ENCODE measurements at regions of chr16 and their contacts with region 1.

Region 1: DNA sequence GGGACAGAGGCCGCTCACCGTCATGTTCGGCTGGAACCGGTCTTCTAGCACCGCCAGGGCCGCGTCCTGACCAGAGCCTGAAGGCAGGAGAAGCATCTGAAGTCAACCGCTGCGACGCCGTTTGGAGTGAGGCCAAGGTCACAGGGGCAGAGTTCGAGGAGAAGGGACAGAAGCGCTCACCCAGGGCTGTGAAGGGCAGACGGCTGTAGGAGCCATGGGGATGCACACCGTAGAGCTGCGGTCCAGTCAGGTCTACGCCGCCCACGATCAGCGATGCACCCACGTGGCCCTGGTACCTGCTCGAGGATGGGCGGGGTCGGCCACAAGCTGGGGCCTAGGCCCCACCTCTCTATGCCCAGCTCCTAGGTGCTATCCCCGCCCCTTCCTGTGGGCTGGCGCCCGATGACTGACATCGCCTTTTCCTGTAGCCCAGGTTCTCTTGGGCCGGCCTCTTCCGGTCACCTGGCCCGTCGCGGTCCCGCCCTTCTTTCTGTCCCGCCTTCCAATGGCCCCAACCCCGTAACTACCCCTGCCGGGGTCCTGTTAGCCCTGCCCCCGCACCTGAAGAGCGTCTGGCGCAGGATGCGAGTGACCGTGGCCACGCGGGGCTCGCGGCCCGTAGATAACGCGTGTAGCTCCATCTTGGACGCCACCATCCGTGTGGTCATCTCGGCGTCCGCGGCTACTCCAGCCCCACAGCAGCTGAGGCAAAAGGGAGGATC is 1.1 kb downstream of the PSMB10 start:
- DNase-seq: peak; percentile 98
- ATAC-seq: peak; percentile 91
- H3K4me3 Mint-ChIP-seq: peak overlapping the region; percentile 100
- H3K27ac Mint-ChIP-seq: peak overlapping the region; percentile 100
- H3K4me1 Mint-ChIP-seq: peaks cover 37% of the 10 kb centered on the region
- H3K27me3 Mint-ChIP-seq: no peaks in the 10 kb centered on the region

Region 2: DNA sequence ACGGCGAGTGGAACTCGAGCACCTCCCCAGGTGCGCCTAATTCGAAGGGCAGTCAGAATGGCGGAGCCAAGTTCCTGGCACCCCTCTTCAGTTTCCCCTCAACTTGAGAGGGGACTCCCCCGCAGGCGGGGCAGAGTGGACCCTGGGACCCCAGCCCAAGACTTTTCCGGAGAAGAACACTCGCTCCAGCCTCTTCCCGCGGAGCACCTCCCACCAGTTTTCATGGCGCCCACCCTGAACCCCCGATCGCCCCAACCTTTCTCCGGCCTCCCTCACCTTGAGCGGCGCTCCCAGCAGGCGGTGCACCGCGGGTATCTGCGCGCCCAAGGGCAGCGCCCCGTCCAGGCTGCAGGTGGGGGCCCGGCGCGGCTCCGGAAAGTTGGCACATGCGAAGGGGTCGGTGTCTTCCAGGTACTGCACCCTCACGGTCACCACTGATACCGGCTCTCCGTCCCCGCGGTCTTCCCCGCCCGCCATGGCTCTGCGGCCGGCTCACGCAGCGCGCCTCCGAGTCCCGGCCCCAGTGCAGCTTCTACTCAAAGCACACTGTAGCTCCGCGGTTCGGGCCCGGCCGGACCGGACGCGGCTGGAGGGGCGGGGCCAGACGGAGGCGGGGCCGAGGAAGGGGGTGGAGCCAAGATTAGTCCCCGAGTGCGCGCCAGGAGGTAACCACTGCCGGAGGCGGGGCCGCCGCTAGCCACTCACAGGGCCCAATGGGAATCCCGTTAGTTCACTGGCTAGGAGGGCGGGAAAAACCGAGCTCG is 688.4 kb before region 1 on chr16 and contains the start of gene FHOD1:
- CTCF ChIA-PET with region 1: no interaction called
- POLR2A ChIA-PET with region 1: no interaction called
- intact Hi-C with region 1: loop called in 1 of 2 experiments (anchors 5 kb)
- DNase-seq: peak; percentile 99
- ATAC-seq: peak; percentile 74
- H3K4me3 Mint-ChIP-seq: peak within 1 kb of the TSS; percentile 87
- H3K27ac Mint-ChIP-seq: peak within 1 kb of the TSS; percentile 85
- H3K4me1 Mint-ChIP-seq: peaks cover 52% of the 10 kb centered on the region
- H3K27me3 Mint-ChIP-seq: peaks cover 11% of the 10 kb centered on the region
- total RNA-seq, gene FHOD1: 75.5 to 77.2 TPM

Region 3: DNA sequence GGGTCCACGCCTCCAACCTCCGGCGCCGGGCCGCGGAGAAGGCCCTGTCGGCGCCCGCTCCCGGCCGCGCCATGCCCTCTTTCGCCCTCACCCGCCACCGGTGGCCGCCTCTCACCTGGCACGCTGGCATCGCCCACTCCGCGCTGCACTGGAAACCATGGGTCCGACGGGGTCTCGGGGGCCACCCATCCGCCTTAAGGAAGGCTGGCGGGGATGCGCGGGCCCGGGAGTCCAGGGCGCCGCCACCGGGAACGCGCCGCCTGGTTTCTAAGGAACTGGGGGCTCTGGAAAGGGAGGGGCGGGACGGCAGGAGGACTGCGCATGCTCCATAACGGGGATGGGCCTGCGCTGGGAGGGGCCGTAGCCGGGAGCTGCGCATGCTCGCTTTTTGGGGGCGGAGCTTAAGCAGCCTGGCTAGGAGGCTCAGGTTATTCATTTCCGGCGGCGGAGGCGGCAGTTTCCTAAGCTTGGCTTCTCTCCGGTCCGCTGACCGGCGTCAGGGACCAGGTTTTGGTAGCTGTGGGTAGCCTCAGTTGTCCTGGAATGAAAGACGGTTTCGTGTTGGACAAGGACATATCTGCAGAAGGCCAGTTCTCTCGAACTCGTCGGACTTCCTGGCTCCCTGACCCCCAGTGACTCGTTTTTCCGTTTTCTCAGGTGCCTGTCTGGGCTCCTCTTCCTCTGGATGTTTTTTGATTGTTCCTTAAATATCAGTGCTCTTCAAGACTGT is 216.3 kb before region 1 on chr16 and contains the start of gene GFOD2:
- CTCF ChIA-PET with region 1: interaction called, 4 read pairs
- POLR2A ChIA-PET with region 1: no interaction called
- intact Hi-C with region 1: loop called in 1 of 2 experiments (anchors 2 kb)
- DNase-seq: peak; percentile 99
- ATAC-seq: peak; percentile 95
- H3K4me3 Mint-ChIP-seq: peak within 1 kb of the TSS; percentile 82
- H3K27ac Mint-ChIP-seq: peak within 1 kb of the TSS; percentile 98
- H3K4me1 Mint-ChIP-seq: peaks cover 29% of the 10 kb centered on the region
- H3K27me3 Mint-ChIP-seq: no peaks in the 10 kb centered on the region
- total RNA-seq, gene GFOD2: 8.7 to 11.5 TPM

Region 4: DNA sequence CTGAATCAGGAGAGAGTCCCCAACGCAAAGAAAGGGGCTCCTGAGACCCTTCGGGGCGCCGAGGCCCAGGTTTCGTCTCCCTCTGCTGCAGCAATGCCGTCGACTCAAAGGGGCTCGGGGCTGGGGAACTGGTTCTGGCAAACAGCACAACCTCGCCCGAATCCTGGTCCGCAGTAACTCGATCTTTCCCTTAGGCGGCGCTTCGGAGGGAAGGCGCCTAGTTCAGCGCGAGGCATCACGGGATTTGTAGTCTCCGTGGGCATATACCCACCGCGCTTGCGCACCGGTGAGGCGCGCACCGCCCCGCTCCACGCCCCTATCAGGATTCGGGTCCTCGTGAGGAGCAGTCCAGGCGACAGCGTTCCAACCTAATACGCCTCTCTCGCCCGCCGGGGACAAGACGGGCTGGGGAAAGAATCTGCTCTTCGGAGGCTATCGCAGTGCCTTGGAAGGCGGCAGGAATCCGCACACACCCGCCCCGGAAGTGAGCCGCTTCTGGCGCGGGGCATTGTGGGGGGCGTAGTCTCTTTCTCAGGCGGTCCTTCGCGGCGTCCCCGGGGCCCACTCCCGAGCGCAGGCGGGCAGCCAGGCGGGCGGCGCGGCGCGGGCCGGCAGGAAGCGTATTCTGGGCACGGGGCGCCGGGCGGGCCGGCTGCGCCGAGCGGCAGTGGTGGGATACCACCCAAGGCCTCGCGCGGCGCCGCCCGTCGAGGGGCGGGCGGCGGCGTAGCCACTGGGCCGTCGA is 93.6 kb before region 1 on chr16 and contains the start of gene THAP11:
- CTCF ChIA-PET with region 1: interaction called, 7 read pairs
- POLR2A ChIA-PET with region 1: interaction called, 3 read pairs
- intact Hi-C with region 1: loop called (anchors 1 kb)
- DNase-seq: peak; percentile 97
- ATAC-seq: peak; percentile 55
- H3K4me3 Mint-ChIP-seq: peak within 1 kb of the TSS; percentile 94
- H3K27ac Mint-ChIP-seq: peak within 1 kb of the TSS; percentile 97
- H3K4me1 Mint-ChIP-seq: peaks cover 33% of the 10 kb centered on the region
- H3K27me3 Mint-ChIP-seq: no peaks in the 10 kb centered on the region
- total RNA-seq, gene THAP11: 31.8 to 34.5 TPM

Region 5: GRCh38 chr16:67892899-67893742 is 42.4 kb before region 1 on chr16 and contains the start of gene PSKH1:
- CTCF ChIA-PET with region 1: interaction called, 3 read pairs
- POLR2A ChIA-PET with region 1: interaction called, 3 read pairs
- intact Hi-C with region 1: loop called (anchors 1 kb)
- DNase-seq: peak; percentile 97
- ATAC-seq: peak; percentile 99
- H3K4me3 Mint-ChIP-seq: peak within 1 kb of the TSS; percentile 92
- H3K27ac Mint-ChIP-seq: peak within 1 kb of the TSS; percentile 92
- H3K4me1 Mint-ChIP-seq: peaks cover 30% of the 10 kb centered on the region
- H3K27me3 Mint-ChIP-seq: no peaks in the 10 kb centered on the region
- total RNA-seq, gene PSKH1: 11.7 to 11.9 TPM

Region 6: GRCh38 chr16:68022704-68023522 is 87.3 kb after region 1 on chr16 and contains the starts of genes DDX28 and DUS2:
- CTCF ChIA-PET with region 1: interaction called, 4 read pairs
- POLR2A ChIA-PET with region 1: interaction called, 4 read pairs
- intact Hi-C with region 1: loop called in 1 of 2 experiments (anchors 1 kb)
- DNase-seq: peak; percentile 95
- ATAC-seq: peak; percentile 89
- H3K4me3 Mint-ChIP-seq: peak within 1 kb of the TSS; percentile 95
- H3K27ac Mint-ChIP-seq: peak within 1 kb of the TSS; percentile 97
- H3K4me1 Mint-ChIP-seq: peaks cover 23% of the 10 kb centered on the region
- H3K27me3 Mint-ChIP-seq: no peaks in the 10 kb centered on the region
- total RNA-seq, gene DDX28: 13.7 to 17.1 TPM
- total RNA-seq, gene DUS2: 29.5 to 33.1 TPM

Measured in activated CD4-positive, alpha-beta T cell treated with anti-CD3 and anti-CD28 coated beads for 36 hours (primary cell).